ENCODE measurements at regions of chr4 and their contacts with region 1.

Region 1: DNA sequence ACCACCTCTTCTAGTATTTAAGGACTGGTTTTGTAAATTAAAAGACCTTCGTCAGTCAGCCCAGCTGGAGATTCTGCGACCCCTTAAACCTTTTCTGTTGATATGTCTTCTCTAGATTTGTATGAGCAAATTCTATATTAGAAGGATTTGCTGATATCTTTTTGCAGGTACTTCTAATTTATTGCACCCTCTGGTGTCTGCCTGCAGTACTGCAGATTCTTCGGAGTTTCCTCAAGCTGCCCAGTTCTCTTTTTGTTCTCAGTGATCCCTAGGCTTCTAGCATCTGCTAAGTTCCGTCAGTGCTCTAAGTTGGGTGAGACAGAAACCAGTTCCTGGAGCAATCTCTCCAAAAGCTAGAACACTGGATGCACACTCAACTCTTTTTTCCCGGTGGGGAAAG is 545.2 kb downstream of the C4orf33 start:
- DNase-seq: no peak
- ATAC-seq: peak; percentile 42
- H3K4me3 Mint-ChIP-seq: no peak overlapping the region
- H3K27ac Mint-ChIP-seq: no peak overlapping the region
- H3K4me1 Mint-ChIP-seq: no peaks in the 10 kb centered on the region
- H3K27me3 Mint-ChIP-seq: no peaks in the 10 kb centered on the region
- CTCF ChIP-seq: no peak

Region 2: GRCh38 chr4:129362674-129363274 is 278.4 kb before region 1 on chr4:
- CTCF ChIA-PET with region 1: interaction called, 17 read pairs
- POLR2A ChIA-PET with region 1: no interaction called
- intact Hi-C with region 1: loop called (anchors 1 kb)
- DNase-seq: no peak
- ATAC-seq: no peak
- H3K4me3 Mint-ChIP-seq: no peak overlapping the region
- H3K27ac Mint-ChIP-seq: no peak overlapping the region
- H3K4me1 Mint-ChIP-seq: no peaks in the 10 kb centered on the region
- H3K27me3 Mint-ChIP-seq: no peaks in the 10 kb centered on the region
- CTCF ChIP-seq: peak; percentile 84

Region 3: GRCh38 chr4:129682586-129682985 is 41.4 kb after region 1 on chr4:
- CTCF ChIA-PET with region 1: no interaction called
- POLR2A ChIA-PET with region 1: no interaction called
- intact Hi-C with region 1: no loop called
- DNase-seq: no peak
- ATAC-seq: no peak
- H3K4me3 Mint-ChIP-seq: no peak overlapping the region
- H3K27ac Mint-ChIP-seq: no peak overlapping the region
- H3K4me1 Mint-ChIP-seq: no peaks in the 10 kb centered on the region
- H3K27me3 Mint-ChIP-seq: no peaks in the 10 kb centered on the region
- CTCF ChIP-seq: no peak

Region 4: GRCh38 chr4:129916991-129917390 is 275.8 kb after region 1 on chr4:
- CTCF ChIA-PET with region 1: no interaction called
- POLR2A ChIA-PET with region 1: no interaction called
- intact Hi-C with region 1: no loop called
- DNase-seq: no peak
- ATAC-seq: no peak
- H3K4me3 Mint-ChIP-seq: no peak overlapping the region
- H3K27ac Mint-ChIP-seq: no peak overlapping the region
- H3K4me1 Mint-ChIP-seq: no peaks in the 10 kb centered on the region
- H3K27me3 Mint-ChIP-seq: no peaks in the 10 kb centered on the region
- CTCF ChIP-seq: no peak

Measured in activated B cell treated with CpG ODN at 0.5 μM for 24 hours (primary cell).